MCF 10A (cell line): ENCODE measurements at regions of chr12 and their contacts with region 1.

Region 1: GRCh38 chr12:29519585-29520182 is 22.2 kb upstream of the OVCH1 start:
- DNase-seq: peak; percentile 56
- H3K4me3 Mint-ChIP-seq: no peak overlapping the region
- H3K27ac Mint-ChIP-seq: no peak overlapping the region
- H3K4me1 Mint-ChIP-seq: peaks cover 9% of the 10 kb centered on the region
- H3K27me3 Mint-ChIP-seq: no peaks in the 10 kb centered on the region
- CTCF ChIP-seq: peak; percentile 56

Region 2: DNA sequence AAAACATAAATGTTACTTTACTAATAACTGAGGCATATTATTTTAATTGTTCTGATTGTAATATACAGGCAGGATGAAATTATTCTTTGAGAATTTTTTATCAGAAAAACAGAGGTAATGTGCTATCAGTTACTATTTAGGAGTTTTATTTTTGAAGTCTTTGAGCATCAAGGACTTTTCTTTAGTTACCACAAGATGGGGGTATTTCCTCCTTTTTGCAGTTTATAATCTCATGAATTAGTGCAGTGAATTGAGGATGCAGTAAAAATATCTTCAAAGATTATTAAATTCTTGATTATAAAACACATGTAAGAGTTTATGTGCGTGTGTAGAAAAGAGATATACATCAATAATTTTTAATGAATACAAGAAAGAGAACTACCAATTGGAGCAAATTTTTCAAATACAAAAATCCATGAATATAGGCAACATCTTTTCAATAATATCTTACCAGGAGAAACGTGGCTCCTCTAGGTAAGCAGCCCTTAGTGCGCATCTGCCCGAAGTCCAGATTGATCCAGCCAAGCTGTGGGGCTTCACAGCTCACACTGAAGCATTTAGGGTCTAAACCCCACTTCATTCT is 210.3 kb before region 1 on chr12:
- CTCF ChIA-PET with region 1: no interaction called
- POLR2A ChIA-PET with region 1: no interaction called
- intact Hi-C with region 1: loop called (anchors 5 kb)
- DNase-seq: peak; percentile 26
- H3K4me3 Mint-ChIP-seq: no peak overlapping the region
- H3K27ac Mint-ChIP-seq: no peak overlapping the region
- H3K4me1 Mint-ChIP-seq: no peaks in the 10 kb centered on the region
- H3K27me3 Mint-ChIP-seq: no peaks in the 10 kb centered on the region
- CTCF ChIP-seq: peak; percentile 51

Region 3: GRCh38 chr12:29562167-29562776 is 42.6 kb after region 1 on chr12:
- CTCF ChIA-PET with region 1: no interaction called
- POLR2A ChIA-PET with region 1: no interaction called
- intact Hi-C with region 1: no loop called
- DNase-seq: peak; percentile 58
- H3K4me3 Mint-ChIP-seq: no peak overlapping the region
- H3K27ac Mint-ChIP-seq: no peak overlapping the region
- H3K4me1 Mint-ChIP-seq: peaks cover 7% of the 10 kb centered on the region
- H3K27me3 Mint-ChIP-seq: no peaks in the 10 kb centered on the region
- CTCF ChIP-seq: no peak

Region 4: GRCh38 chr12:29634057-29634456 is 114.4 kb after region 1 on chr12:
- CTCF ChIA-PET with region 1: no interaction called
- POLR2A ChIA-PET with region 1: no interaction called
- intact Hi-C with region 1: no loop called
- DNase-seq: no peak
- H3K4me3 Mint-ChIP-seq: no peak overlapping the region
- H3K27ac Mint-ChIP-seq: peak overlapping the region; percentile 31
- H3K4me1 Mint-ChIP-seq: peaks cover 20% of the 10 kb centered on the region
- H3K27me3 Mint-ChIP-seq: no peaks in the 10 kb centered on the region
- CTCF ChIP-seq: no peak

Region 5: GRCh38 chr12:30134229-30134628 is 614.5 kb after region 1 on chr12:
- CTCF ChIA-PET with region 1: interaction called, 3 read pairs
- POLR2A ChIA-PET with region 1: no interaction called
- intact Hi-C with region 1: loop called (anchors 5 kb)
- DNase-seq: peak; percentile 63
- H3K4me3 Mint-ChIP-seq: no peak overlapping the region
- H3K27ac Mint-ChIP-seq: no peak overlapping the region
- H3K4me1 Mint-ChIP-seq: peaks cover 6% of the 10 kb centered on the region
- H3K27me3 Mint-ChIP-seq: no peaks in the 10 kb centered on the region
- CTCF ChIP-seq: peak; percentile 37

Region 6: DNA sequence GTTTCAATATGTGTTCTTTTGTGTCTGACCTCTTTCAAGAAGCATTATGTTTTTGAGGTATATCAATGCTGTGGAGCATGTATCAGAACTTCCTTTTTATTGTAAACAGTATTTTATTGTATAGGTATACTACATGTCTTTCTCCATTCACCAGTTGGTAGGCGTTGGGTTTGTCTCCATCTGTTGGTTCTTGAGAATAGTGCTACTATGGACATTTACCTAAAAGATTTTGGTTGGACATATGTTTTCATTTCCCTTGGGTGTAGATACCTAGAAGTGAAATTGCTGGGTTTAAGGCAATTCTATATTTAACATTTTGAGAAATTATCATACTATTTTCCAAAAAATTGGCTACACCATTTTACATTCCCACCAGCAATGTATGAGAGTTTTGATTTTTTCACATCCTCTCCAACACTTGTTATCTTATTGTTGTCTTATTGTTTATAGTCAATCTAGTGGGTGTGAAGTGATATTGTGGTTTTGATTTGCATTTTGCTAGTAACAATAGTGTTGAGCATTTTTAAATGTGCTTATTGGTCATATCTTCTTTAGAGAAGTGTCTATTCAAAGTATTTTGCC is 766.8 kb after region 1 on chr12:
- CTCF ChIA-PET with region 1: no interaction called
- POLR2A ChIA-PET with region 1: no interaction called
- intact Hi-C with region 1: loop called (anchors 1 kb)
- DNase-seq: peak; percentile 59
- H3K4me3 Mint-ChIP-seq: no peak overlapping the region
- H3K27ac Mint-ChIP-seq: no peak overlapping the region
- H3K4me1 Mint-ChIP-seq: no peaks in the 10 kb centered on the region
- H3K27me3 Mint-ChIP-seq: peaks cover 19% of the 10 kb centered on the region
- CTCF ChIP-seq: peak; percentile 63

Region 7: GRCh38 chr12:30515351-30515750 is 995.7 kb after region 1 on chr12:
- CTCF ChIA-PET with region 1: interaction called, 3 read pairs
- POLR2A ChIA-PET with region 1: no interaction called
- intact Hi-C with region 1: loop called (anchors 10 kb)
- DNase-seq: peak; percentile 3
- H3K4me3 Mint-ChIP-seq: no peak overlapping the region
- H3K27ac Mint-ChIP-seq: no peak overlapping the region
- H3K4me1 Mint-ChIP-seq: no peaks in the 10 kb centered on the region
- H3K27me3 Mint-ChIP-seq: no peaks in the 10 kb centered on the region
- CTCF ChIP-seq: peak; percentile 32